ENCODE measurements at regions of chr10 and their contacts with region 1.

Region 1: GRCh38 chr10:121734589-121735045 is 136.4 kb upstream of the FGFR2 start:
- DNase-seq: no peak
- H3K4me3 ChIP-seq: no peak overlapping the region
- H3K27ac ChIP-seq: no peak overlapping the region
- H3K4me1 ChIP-seq: peaks cover 0 to 22% (median 6%) of the 10 kb centered on the region in 3 donors
- H3K27me3 ChIP-seq: no peaks in the 10 kb centered on the region
- CTCF ChIP-seq: peak in 5 of 6 experiments; percentile 18 to 72 (median 55)
- POLR2A ChIP-seq: no peak

Region 2: GRCh38 chr10:120942806-120943413 is 791.7 kb before region 1 on chr10:
- intact Hi-C with region 1: loop called (anchors 5 kb)
- DNase-seq: peak; percentile 11
- H3K4me3 ChIP-seq: no peak overlapping the region
- H3K27ac ChIP-seq: peak overlapping the region in 2 of 4 donors; percentile 8 to 23
- H3K4me1 ChIP-seq: peaks cover 3 to 43% (median 25%) of the 10 kb centered on the region in 3 donors
- H3K27me3 ChIP-seq: peaks cover 0 to 10% (median 0%) of the 10 kb centered on the region in 4 donors
- CTCF ChIP-seq: peak; percentile 52 to 94 (median 90)
- POLR2A ChIP-seq: no peak

Region 3: GRCh38 chr10:121615435-121615793 is 119.2 kb before region 1 on chr10:
- intact Hi-C with region 1: loop called (anchors 10 kb)
- DNase-seq: no peak
- H3K4me3 ChIP-seq: no peak overlapping the region
- H3K27ac ChIP-seq: no peak overlapping the region
- H3K4me1 ChIP-seq: peaks cover 0 to 15% (median 0%) of the 10 kb centered on the region in 3 donors
- H3K27me3 ChIP-seq: no peaks in the 10 kb centered on the region
- CTCF ChIP-seq: no peak
- POLR2A ChIP-seq: no peak